H1 (cell line): ENCODE measurements at regions of chr2 and their contacts with region 1.

Region 1: DNA sequence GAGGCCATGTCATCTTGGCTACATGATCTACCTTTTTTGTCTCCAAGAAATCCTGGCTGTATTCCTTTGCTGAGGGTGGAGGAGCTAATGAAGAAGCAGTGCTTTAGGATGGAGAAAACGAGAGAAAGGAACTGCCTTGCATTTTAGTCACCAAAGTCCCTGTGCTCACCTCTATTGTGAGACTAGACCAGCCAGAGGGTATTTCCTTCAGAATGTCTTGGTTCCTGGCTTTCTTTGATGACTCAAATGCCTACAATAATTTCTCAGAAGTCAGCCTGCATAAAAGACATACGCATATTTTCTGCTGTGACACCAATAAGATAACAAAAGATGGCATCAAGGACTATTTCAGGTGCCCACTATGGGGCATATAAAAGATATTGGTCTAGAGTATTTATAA is 10.8 kb downstream of the SF3B6 start:
- DNase-seq: no peak
- H3K4me3 ChIP-seq: no peak overlapping the region
- H3K27ac ChIP-seq: no peak overlapping the region
- H3K4me1 ChIP-seq: no peaks in the 10 kb centered on the region
- H3K27me3 ChIP-seq: no peaks in the 10 kb centered on the region
- CTCF ChIP-seq: no peak
- EP300 ChIP-seq: no peak
- POLR2A ChIP-seq: no peak
- RAD21 ChIP-seq: no peak

Region 2: DNA sequence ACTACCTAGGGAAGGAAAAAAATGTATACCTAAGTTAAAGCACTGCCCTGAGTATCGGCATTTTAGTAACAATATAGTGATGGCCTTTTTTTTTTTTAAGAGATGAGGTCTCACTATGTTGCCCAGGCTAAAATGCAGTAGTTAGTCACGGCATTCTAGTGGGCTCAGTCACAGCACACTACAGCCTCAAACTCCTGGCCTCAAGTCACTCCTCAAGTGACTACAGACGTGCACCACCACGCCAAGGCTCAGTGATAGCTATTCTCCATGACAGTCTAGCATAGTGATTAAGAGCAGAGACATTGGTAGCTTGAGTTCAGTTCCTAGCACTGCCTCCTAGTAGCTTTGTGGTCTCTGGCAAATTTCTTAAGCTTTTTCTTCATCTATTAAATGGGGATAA is 97.5 kb before region 1 on chr2:
- CTCF ChIA-PET with region 1: no interaction called
- POLR2A ChIA-PET with region 1: no interaction called
- DNase-seq: no peak
- H3K4me3 ChIP-seq: no peak overlapping the region
- H3K27ac ChIP-seq: no peak overlapping the region
- H3K4me1 ChIP-seq: no peaks in the 10 kb centered on the region
- H3K27me3 ChIP-seq: no peaks in the 10 kb centered on the region
- CTCF ChIP-seq: no peak
- EP300 ChIP-seq: no peak
- POLR2A ChIP-seq: no peak
- RAD21 ChIP-seq: no peak

Region 3: GRCh38 chr2:24075915-24076848 is 10.8 kb after region 1 on chr2 and contains the start of gene SF3B6:
- CTCF ChIA-PET with region 1: interaction called, 14 read pairs
- POLR2A ChIA-PET with region 1: interaction called, 31 read pairs
- DNase-seq: peak; percentile 100
- H3K4me3 ChIP-seq: peak within 1 kb of the TSS; percentile 74 to 96 (median 94)
- H3K27ac ChIP-seq: peak within 1 kb of the TSS; percentile 87
- H3K4me1 ChIP-seq: peaks cover 0 to 7% (median 2%) of the 10 kb centered on the region in 4 experiments; a peak in 4 of 7 replicates
- H3K27me3 ChIP-seq: no peaks in the 10 kb centered on the region
- CTCF ChIP-seq: no peak
- EP300 ChIP-seq: peak in 1 of 2 experiments; percentile 85; a peak in 1 of 3 replicates
- POLR2A ChIP-seq: peak in 1 of 2 experiments; percentile 89; a peak in 2 of 3 replicates
- RAD21 ChIP-seq: peak in 1 of 2 experiments; percentile 17; a peak in 2 of 4 replicates
- total RNA-seq, gene SF3B6: 126 and 127 TPM in 2 replicates

Region 4: DNA sequence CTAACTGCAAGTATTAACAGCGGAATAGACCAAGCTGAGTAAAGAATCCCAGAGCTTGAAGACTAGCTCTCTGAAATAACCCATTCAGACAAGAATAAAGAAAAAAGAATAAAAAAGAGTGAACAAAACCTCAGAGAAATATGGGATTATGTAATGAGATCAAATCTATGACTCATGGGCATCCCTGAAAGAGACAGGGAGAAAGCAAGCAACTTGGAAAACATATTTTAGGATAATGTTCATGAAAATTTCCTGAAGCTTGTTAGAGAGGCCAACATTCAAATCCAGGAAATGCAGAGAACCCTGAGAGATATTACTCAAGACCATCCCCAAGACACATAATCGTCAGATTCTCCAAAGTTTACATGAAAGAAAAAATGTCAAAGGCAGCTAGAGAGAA is 40.5 kb after region 1 on chr2:
- CTCF ChIA-PET with region 1: no interaction called
- POLR2A ChIA-PET with region 1: no interaction called
- DNase-seq: no peak
- H3K4me3 ChIP-seq: no peak overlapping the region
- H3K27ac ChIP-seq: no peak overlapping the region
- H3K4me1 ChIP-seq: no peaks in the 10 kb centered on the region
- H3K27me3 ChIP-seq: no peaks in the 10 kb centered on the region
- CTCF ChIP-seq: no peak
- EP300 ChIP-seq: no peak
- POLR2A ChIP-seq: no peak
- RAD21 ChIP-seq: no peak

Region 5: DNA sequence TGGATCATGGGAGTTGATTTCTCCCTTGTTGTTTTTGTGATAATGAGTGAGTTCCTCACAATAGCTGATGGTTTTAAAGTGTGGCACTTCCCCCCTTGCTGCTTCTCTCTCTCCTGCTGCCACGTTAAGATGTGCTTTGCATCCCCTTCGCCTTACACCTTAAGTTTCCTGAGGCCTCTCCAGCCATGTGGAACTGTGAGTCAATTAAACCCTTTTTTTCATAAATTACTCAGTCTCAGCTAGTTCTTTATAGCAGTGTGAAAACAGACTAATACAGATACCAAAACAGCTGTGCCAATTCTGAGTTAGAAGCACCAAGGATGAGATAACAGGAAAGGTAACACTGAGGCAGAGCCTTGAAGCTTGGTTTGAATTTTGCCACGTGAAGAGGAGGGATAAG is 250.3 kb after region 1 on chr2:
- CTCF ChIA-PET with region 1: no interaction called
- POLR2A ChIA-PET with region 1: no interaction called
- DNase-seq: no peak
- H3K4me3 ChIP-seq: no peak overlapping the region
- H3K27ac ChIP-seq: no peak overlapping the region
- H3K4me1 ChIP-seq: no peaks in the 10 kb centered on the region
- H3K27me3 ChIP-seq: no peaks in the 10 kb centered on the region
- CTCF ChIP-seq: no peak
- EP300 ChIP-seq: no peak
- POLR2A ChIP-seq: no peak
- RAD21 ChIP-seq: no peak